K562 (cell line): ENCODE measurements at regions of chr9 and their contacts with region 1.

Region 1: GRCh38 chr9:136644598-136645351 is 17.9 kb upstream of the EGFL7 start:
- DNase-seq: peak; percentile 60 to 88 (median 72)
- ATAC-seq: peak; percentile 75
- H3K4me3 ChIP-seq: peak overlapping the region; percentile 41
- H3K27ac ChIP-seq: peak overlapping the region; percentile 83
- H3K4me1 ChIP-seq: peaks cover 39 to 62% of the 10 kb centered on the region in 2 experiments
- H3K27me3 ChIP-seq: no peaks in the 10 kb centered on the region
- CTCF ChIP-seq: peak; percentile 88 to 91 (median 90)
- EP300 ChIP-seq: peak; percentile 15; the same call in 1 of the 2 replicates
- POLR2A ChIP-seq: no peak
- RAD21 ChIP-seq: peak; percentile 63 to 81

Region 2: DNA sequence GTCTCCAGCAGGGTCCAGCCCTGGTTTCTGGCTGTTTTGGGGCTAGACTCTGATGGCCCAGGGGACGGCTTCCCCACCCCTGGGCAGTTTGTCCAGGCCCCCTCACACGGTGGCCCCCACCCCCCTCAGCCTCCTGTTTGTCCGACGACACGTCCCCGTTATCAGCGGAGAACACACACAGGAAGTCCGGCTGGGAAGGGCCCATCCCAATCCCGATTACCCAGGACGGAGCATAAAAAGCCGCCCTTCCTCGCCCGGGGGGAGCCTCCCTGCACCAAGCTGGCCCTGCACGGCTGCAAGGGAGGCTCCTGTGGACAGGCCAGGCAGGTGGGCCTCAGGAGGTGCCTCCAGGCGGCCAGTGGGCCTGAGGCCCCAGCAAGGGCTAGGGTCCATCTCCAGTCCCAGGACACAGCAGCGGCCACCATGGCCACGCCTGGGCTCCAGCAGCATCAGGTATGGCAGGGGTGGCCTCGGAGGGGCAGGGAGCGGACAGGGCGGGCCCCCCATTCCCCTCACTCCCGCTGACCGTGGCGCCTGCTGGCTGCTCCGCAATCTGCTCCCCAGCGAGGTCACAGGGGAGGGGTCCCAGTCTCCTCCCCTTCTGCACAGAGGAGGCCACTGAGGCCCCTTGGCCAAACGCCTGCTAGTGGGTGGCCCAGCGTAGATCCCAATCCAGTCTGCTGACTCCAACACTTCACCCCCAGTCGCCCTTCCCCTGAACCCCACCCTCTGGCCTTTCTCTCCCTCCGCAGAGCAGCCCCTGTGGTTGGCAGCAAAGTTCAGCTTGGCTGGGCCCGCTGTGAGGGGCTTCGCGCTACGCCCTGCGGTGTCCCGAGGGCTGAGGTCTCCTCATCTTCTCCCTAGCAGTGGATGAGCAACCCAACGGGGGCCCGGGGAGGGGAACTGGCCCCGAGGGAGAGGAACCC is 18.1 kb after region 1 on chr9 and contains the start of gene EGFL7:
- CTCF ChIA-PET with region 1: interaction called, 3 read pairs
- POLR2A ChIA-PET with region 1: interaction called, 4 read pairs
- in situ Hi-C with region 1: no loop called
- intact Hi-C with region 1: loop called (anchors 1 kb)
- DNase-seq: peak; percentile 84 to 97 (median 90)
- ATAC-seq: peak; percentile 68
- H3K4me3 ChIP-seq: peak within 1 kb of the TSS; percentile 81
- H3K27ac ChIP-seq: peak within 1 kb of the TSS; percentile 79
- H3K4me1 ChIP-seq: peaks cover 22 to 96% of the 10 kb centered on the region in 2 experiments
- H3K27me3 ChIP-seq: no peaks in the 10 kb centered on the region
- CTCF ChIP-seq: no peak
- EP300 ChIP-seq: peak; percentile 90
- POLR2A ChIP-seq: peak; percentile 99
- RAD21 ChIP-seq: no peak
- polyA plus RNA-seq, gene EGFL7: 1.5 to 10.9 TPM

Region 3: DNA sequence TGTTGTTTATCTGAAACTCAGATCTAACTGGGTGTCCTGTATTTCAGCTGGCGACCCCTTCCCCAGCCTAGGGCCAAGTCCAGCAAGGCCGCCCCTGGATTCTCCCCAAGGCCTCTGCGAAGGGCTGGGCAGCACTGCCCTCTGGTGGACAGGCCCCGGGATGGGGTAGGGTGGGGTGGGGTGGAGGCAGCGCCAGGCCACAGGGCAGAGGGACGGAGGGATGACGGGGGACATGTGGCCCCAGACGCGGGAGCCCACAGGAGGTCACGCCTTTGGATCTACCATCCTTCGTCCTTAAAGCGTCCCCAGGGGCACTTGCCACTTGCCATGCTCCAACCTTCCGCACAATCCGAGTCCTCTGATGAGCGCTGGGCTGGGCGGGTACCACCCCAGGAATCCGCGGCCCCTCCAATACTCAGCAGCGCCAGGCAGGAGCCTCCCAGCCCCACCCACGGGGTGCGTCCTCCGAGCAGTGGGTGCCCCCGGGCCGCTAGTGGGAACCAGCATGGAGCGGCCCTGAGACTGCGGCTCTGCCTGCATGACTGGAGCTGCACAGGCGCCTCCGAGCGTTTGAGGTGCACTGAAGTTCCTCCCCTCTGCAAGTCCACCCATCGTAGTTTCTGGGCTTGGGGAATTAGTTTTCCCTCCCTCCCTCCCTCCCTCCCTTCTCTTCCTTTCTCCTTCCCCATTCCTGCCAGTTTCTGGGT is 49.6 kb after region 1 on chr9:
- CTCF ChIA-PET with region 1: interaction called, 12 read pairs
- POLR2A ChIA-PET with region 1: no interaction called
- in situ Hi-C with region 1: no loop called
- intact Hi-C with region 1: loop called (anchors 5 kb)
- DNase-seq: peak; percentile 82 to 94 (median 87)
- ATAC-seq: peak; percentile 95
- H3K4me3 ChIP-seq: no peak overlapping the region
- H3K27ac ChIP-seq: no peak overlapping the region
- H3K4me1 ChIP-seq: peaks cover 9 to 74% of the 10 kb centered on the region in 2 experiments; a peak in 4 of 5 replicates
- H3K27me3 ChIP-seq: no peaks in the 10 kb centered on the region
- CTCF ChIP-seq: peak; percentile 85 to 94 (median 85)
- EP300 ChIP-seq: no peak
- POLR2A ChIP-seq: no peak
- RAD21 ChIP-seq: peak; percentile 87 to 90